Naive thymus-derived CD4-positive, alpha-beta T cell (primary cell): ENCODE measurements at regions of chr20 and their contacts with region 1.

Region 1: DNA sequence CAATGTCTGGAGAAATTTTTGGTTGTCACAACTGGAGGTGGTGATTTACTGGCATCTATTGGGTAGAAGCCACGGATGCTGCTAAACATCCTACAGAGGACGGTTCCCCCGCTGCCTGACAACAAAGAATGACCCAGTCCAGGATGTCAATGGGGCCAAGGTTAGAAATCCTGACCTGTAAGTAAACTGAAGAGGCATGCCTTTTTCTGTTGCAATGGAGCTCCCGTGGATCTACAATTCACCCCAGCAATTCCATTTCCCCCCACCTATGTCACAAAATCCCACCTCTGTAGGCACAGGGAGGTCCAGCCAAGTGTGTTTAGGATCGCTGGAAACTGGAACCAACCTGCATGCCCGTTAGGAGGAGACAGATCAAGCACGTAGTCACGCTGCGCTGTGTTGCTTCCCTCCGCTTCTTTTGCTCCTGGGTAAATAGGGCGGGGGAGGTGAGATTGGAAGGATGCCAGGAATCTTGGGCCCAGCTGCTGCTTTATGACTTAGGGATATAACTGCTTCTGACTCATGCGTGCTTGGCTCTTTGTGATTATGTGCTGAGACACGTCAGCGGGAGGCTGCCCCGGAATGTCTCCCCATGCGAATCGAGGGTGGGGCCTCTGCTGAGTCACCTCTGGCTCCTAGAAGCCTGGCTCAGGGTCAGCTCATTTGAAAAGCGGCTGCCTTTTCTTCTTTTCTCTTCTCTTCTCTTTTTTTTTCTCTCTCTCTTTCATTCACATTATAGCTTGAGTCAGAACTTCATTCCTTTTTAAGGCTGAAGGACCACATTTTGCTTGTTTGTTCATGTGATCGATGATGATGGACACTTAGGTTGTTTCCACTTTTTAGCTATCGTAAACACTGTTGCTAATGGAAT is 12.4 kb upstream of the PEDS1 start:
- DNase-seq: peak in 6 of 9 donors; percentile 15 to 76 (median 36)
- ATAC-seq: peak; percentile 94
- H3K4me3 ChIP-seq: no peak overlapping the region
- H3K4me3 Mint-ChIP-seq: peak overlapping the region; percentile 5 to 86 (median 48)
- H3K27ac ChIP-seq: no peak overlapping the region
- H3K27ac Mint-ChIP-seq: peak overlapping the region in 4 of 9 donors; percentile 14 to 85 (median 44)
- H3K4me1 ChIP-seq: no peaks in the 10 kb centered on the region
- H3K4me1 Mint-ChIP-seq: peaks cover 7 to 16% (median 13%) of the 10 kb centered on the region in 7 donors
- H3K27me3 ChIP-seq: no peaks in the 10 kb centered on the region
- H3K27me3 Mint-ChIP-seq: peaks cover 0 to 10% (median 5%) of the 10 kb centered on the region in 5 donors

Region 2: GRCh38 chr20:49982346-49983122 is 183.4 kb before region 1 on chr20 and contains the start of gene SNAI1:
- CTCF ChIA-PET with region 1: interaction called, 7 read pairs
- POLR2A ChIA-PET with region 1: interaction called, 4 read pairs
- intact Hi-C with region 1: loop called (anchors 1 to 2 kb)
- DNase-seq: peak; percentile 67 to 86 (median 84)
- ATAC-seq: peak; percentile 97
- H3K4me3 ChIP-seq: peak within 1 kb of the TSS; percentile 57
- H3K4me3 Mint-ChIP-seq: peak within 1 kb of the TSS; percentile 67 to 85 (median 76)
- H3K27ac ChIP-seq: peak within 1 kb of the TSS; percentile 72
- H3K27ac Mint-ChIP-seq: peak within 1 kb of the TSS; percentile 2 to 88 (median 68)
- H3K4me1 ChIP-seq: peaks cover 11 to 18% of the 10 kb centered on the region in 2 donors
- H3K4me1 Mint-ChIP-seq: peaks cover 12 to 31% (median 25%) of the 10 kb centered on the region in 7 donors
- H3K27me3 ChIP-seq: no peaks in the 10 kb centered on the region
- H3K27me3 Mint-ChIP-seq: peaks cover 0 to 37% (median 0%) of the 10 kb centered on the region in 5 donors
- total RNA-seq, gene SNAI1: 0.22 to 7.0 (median 0.34) TPM

Region 3: DNA sequence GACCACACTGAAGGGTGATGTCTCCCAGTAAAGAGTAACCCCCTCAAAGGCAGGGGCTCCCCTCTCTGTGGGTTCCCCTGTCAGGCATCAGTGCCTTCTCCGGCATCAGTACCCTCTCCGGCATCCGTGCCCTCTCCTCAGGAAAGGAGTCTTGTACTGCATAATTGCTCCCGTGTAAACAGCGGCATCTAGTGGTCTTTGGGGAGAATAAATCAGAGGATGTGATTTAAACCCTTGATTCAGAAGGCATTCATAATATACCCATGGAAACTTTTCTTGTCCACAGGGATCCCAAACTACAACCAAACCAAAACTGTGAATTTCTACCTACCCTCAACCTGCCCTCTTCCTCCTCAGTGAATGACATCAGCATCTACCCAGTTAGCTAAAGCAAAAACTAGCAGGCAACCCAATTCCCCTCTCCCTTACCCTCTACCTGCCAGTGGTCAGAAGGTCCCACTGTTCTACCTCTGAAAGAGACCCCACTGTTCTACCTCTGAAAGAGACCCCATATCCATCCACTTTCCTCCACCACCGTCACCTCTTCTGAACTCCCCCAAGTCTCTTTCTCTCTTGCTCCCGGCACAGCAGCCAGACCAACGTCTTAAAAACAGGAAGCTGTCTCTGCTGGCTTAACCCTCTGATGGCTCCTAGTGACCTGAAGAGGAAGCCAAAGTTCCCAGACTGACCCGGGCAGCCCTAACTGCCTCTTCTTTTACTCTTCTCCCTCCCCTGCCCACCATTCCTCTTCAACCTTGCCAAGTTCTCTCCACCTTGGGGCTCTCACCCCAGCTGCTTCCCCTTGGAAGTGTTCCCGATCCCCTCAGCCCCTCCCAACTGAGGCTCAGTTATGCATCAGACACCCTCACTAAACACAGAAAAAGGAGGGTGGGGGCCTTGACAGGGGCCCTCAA is 80.2 kb before region 1 on chr20:
- CTCF ChIA-PET with region 1: no interaction called
- POLR2A ChIA-PET with region 1: no interaction called
- intact Hi-C with region 1: loop called in 1 of 2 experiments (anchors 1 kb)
- DNase-seq: peak in 7 of 9 donors; percentile 29 to 63 (median 50)
- ATAC-seq: peak; percentile 87
- H3K4me3 ChIP-seq: peak overlapping the region; percentile 63
- H3K4me3 Mint-ChIP-seq: peak overlapping the region; percentile 75 to 91 (median 86)
- H3K27ac ChIP-seq: peak overlapping the region; percentile 43
- H3K27ac Mint-ChIP-seq: peak overlapping the region; percentile 64 to 93 (median 85)
- H3K4me1 ChIP-seq: peaks cover 9 to 13% of the 10 kb centered on the region in 2 donors
- H3K4me1 Mint-ChIP-seq: peaks cover 20 to 43% (median 32%) of the 10 kb centered on the region in 7 donors
- H3K27me3 ChIP-seq: no peaks in the 10 kb centered on the region
- H3K27me3 Mint-ChIP-seq: no peaks in the 10 kb centered on the region

Region 4: GRCh38 chr20:50146732-50147662 is 18.9 kb before region 1 on chr20:
- CTCF ChIA-PET with region 1: interaction called, 5 read pairs
- POLR2A ChIA-PET with region 1: interaction called, 8 read pairs
- intact Hi-C with region 1: loop called in 1 of 2 experiments (anchors 1 kb)
- DNase-seq: peak; percentile 50 to 90 (median 85)
- ATAC-seq: peak; percentile 97
- H3K4me3 ChIP-seq: peak overlapping the region; percentile 44
- H3K4me3 Mint-ChIP-seq: peak overlapping the region; percentile 79 to 88 (median 85)
- H3K27ac ChIP-seq: peak overlapping the region; percentile 85
- H3K27ac Mint-ChIP-seq: peak overlapping the region; percentile 96 to 99 (median 98)
- H3K4me1 ChIP-seq: peaks cover 31 to 40% of the 10 kb centered on the region in 2 donors
- H3K4me1 Mint-ChIP-seq: peaks cover 59 to 77% (median 70%) of the 10 kb centered on the region in 7 donors
- H3K27me3 ChIP-seq: no peaks in the 10 kb centered on the region
- H3K27me3 Mint-ChIP-seq: no peaks in the 10 kb centered on the region

Region 5: DNA sequence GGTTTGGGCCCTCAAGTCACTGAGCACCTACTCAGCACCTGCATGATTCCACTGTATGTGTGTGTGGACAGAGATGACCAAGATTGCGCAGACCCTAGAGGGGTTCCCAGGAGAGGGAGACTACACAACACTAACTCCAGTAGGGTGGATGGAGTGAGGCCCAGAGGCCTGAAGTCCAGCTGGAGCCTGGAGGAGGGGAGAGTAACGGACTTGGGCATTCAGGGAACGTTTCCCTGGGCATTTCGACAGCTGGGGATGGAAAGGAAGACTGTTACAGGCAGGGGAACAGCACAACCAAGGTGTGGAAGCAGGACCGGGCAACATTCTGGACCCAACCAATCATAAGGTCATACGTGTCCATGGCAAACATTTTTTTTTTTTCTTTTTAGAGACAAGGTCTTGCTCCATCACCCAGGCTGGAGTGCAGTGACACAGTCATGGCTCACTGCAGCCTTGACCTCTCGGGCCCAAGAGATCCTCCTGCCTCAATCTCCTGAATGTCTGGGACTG is 13.6 kb after region 1 on chr20:
- CTCF ChIA-PET with region 1: interaction called, 21 read pairs
- POLR2A ChIA-PET with region 1: no interaction called
- intact Hi-C with region 1: loop called in 1 of 2 experiments (anchors 1 kb)
- DNase-seq: no peak
- ATAC-seq: no peak
- H3K4me3 ChIP-seq: no peak overlapping the region
- H3K4me3 Mint-ChIP-seq: no peak overlapping the region
- H3K27ac ChIP-seq: no peak overlapping the region
- H3K27ac Mint-ChIP-seq: no peak overlapping the region
- H3K4me1 ChIP-seq: no peaks in the 10 kb centered on the region
- H3K4me1 Mint-ChIP-seq: peaks cover 0 to 6% (median 0%) of the 10 kb centered on the region in 7 donors
- H3K27me3 ChIP-seq: no peaks in the 10 kb centered on the region
- H3K27me3 Mint-ChIP-seq: peaks cover 3 to 15% (median 8%) of the 10 kb centered on the region in 5 donors